ENCODE measurements at regions of chrX and their contacts with region 1.

Region 1: DNA sequence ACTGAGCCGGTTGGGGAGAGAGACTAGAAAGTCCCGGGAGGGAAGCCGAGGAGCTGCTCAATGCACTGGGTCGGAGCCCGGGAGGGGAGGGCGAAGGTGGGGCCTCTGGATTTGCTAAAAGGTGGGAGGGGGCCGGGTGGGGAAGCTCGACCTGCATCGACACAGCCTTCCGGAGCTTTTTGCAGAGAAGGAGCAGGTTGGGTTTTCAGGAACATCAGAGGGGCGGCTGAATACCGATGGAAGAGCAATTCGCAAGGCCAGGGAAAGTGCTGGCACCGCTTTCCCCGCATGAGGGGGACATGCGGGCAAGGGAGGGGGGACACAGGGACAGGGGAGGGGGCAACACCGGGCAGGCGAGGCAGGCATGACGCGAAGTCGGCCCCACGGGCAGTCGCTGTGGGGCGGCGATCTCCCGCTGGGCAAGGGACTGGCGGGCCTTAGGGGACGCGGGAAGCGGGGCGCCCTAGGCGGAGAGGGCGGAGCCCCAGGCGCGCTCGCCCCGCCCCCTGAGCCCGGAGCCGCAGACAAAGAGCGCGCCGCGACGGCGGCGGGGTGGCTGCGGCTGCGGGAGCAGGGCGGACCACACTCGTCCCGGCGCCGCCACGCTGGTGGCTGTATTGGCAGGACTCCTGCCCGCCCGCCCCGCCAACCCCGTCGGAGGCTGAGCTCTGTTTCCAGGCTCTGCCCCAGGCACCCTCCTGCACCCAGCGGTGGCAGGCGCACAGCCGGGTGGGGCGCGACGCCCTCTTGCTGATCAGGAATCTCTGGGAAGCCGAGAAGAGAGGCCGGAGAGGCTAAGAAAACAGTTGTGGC is 11.6 kb downstream of the PDZD4 start:
- DNase-seq: peak; percentile 25 to 71 (median 49)
- ATAC-seq: peak; percentile 76
- H3K4me3 ChIP-seq: peak overlapping the region; percentile 33
- H3K4me3 Mint-ChIP-seq: peak overlapping the region in 9 of 10 donors; percentile 48 to 69 (median 57)
- H3K27ac ChIP-seq: peak overlapping the region; percentile 51
- H3K27ac Mint-ChIP-seq: peak overlapping the region in 2 of 9 donors; percentile 55 to 87
- H3K4me1 ChIP-seq: peaks cover 39 to 44% of the 10 kb centered on the region in 2 donors
- H3K4me1 Mint-ChIP-seq: peaks cover 18 to 61% (median 40%) of the 10 kb centered on the region in 7 donors
- H3K27me3 ChIP-seq: no peaks in the 10 kb centered on the region
- H3K27me3 Mint-ChIP-seq: peaks cover 0 to 20% (median 0%) of the 10 kb centered on the region in 5 donors

Region 2: GRCh38 chrX:153828723-153829548 is 10.2 kb after region 1 on chrX:
- CTCF ChIA-PET with region 1: no interaction called
- POLR2A ChIA-PET with region 1: no interaction called
- intact Hi-C with region 1: loop called in 1 of 2 experiments (anchors 1 kb)
- DNase-seq: no peak
- ATAC-seq: peak; percentile 42
- H3K4me3 ChIP-seq: peak overlapping the region; percentile 24
- H3K4me3 Mint-ChIP-seq: peak overlapping the region; percentile 17 to 83 (median 72)
- H3K27ac ChIP-seq: no peak overlapping the region
- H3K27ac Mint-ChIP-seq: peak overlapping the region in 3 of 9 donors; percentile 41 to 58 (median 46)
- H3K4me1 ChIP-seq: peaks cover 0 to 3% of the 10 kb centered on the region in 2 donors
- H3K4me1 Mint-ChIP-seq: peaks cover 10 to 37% (median 20%) of the 10 kb centered on the region in 7 donors
- H3K27me3 ChIP-seq: no peaks in the 10 kb centered on the region
- H3K27me3 Mint-ChIP-seq: peaks cover 0 to 39% (median 0%) of the 10 kb centered on the region in 5 donors

Region 3: DNA sequence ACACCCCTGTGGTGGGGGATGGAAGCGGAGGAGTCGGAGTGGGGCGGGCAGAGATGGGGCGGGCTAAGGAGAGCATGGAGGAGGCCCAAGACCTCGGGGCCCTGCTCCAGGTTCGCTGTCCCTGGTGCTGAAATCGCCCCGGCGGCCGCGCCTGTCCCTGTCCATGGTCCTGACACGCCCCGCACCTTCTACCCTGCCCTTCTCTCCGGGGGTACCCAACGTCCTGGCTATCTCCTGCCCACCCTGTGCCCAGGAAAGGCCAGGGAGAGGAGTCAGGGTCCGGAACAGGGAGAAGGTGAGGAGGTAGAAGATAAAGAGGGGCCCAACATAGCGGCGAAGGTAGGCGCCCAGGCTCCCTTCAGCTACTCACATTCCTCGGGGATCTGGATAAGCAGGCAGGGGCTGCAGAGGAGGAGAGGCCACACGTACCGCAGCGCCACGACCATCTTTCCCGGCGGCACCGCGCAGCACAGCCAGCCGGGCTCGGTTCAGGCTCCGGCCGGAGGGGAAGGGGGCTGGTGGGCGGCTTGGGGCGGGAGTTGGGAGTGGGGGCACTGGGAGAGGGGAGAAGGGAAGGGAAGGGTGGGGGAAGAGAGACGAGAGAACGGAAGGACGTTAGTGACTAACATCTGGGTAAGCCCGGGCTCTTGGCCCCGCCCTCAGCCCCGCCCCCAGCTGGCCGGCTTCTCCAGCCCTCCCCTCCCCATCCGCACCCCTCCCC is 56.8 kb after region 1 on chrX:
- CTCF ChIA-PET with region 1: no interaction called
- POLR2A ChIA-PET with region 1: no interaction called
- intact Hi-C with region 1: loop called (anchors 5 kb)
- DNase-seq: peak; percentile 49 to 82 (median 58)
- ATAC-seq: peak; percentile 96
- H3K4me3 ChIP-seq: no peak overlapping the region
- H3K4me3 Mint-ChIP-seq: peak overlapping the region in 2 of 10 donors; percentile 29 to 45
- H3K27ac ChIP-seq: no peak overlapping the region
- H3K27ac Mint-ChIP-seq: peak overlapping the region in 5 of 9 donors; percentile 39 to 81 (median 66)
- H3K4me1 ChIP-seq: peaks cover 0 to 4% of the 10 kb centered on the region in 2 donors
- H3K4me1 Mint-ChIP-seq: peaks cover 7 to 25% (median 20%) of the 10 kb centered on the region in 7 donors
- H3K27me3 ChIP-seq: no peaks in the 10 kb centered on the region
- H3K27me3 Mint-ChIP-seq: peaks cover 0 to 18% (median 11%) of the 10 kb centered on the region in 5 donors

Region 4: DNA sequence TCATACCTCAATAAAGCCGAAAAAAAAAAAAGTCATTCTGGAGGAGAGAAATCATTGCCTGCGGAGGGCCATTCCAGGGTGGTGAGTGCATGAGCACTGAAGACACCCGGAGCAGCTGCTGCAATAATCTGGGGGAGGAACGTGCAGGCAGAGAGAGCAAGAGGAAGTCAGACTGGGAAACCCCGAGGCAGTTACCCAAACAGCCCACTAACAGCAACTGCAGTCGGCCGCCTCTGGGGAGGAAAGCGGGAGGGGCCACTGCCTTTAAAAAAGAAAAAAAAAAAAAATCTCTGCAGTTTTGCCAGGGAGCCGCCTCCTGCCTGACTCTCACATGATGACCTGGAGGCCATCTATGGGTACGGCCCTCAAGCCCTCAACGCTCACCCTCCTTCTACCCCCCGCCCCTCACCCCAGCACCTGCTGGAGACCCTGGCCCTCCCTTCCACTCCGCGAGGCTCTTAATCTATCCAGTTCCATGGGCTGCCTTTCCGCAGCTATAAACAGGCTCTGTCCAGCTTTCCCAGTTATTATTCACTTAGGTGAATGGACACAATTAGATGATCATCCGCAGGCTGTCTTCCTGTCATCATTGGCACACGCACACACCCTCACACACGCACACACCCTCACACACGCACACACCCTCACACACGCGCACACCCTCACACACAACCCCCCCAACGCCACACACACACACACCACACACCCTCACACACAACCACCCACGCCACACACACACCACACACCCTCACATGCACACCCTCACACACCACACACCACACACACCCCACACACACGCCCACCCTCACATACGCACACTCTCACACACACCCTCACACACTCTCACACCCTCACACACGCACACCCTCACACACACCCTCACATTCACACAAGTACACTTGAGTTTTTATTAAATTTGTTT is 82.3 kb after region 1 on chrX:
- CTCF ChIA-PET with region 1: no interaction called
- POLR2A ChIA-PET with region 1: no interaction called
- intact Hi-C with region 1: loop called in 1 of 2 experiments (anchors 5 kb)
- DNase-seq: peak in 8 of 9 donors; percentile 45 to 76 (median 64)
- ATAC-seq: peak; percentile 91
- H3K4me3 ChIP-seq: no peak overlapping the region
- H3K4me3 Mint-ChIP-seq: peak overlapping the region; percentile 51 to 84 (median 64)
- H3K27ac ChIP-seq: no peak overlapping the region
- H3K27ac Mint-ChIP-seq: peak overlapping the region in 8 of 9 donors; percentile 33 to 88 (median 71)
- H3K4me1 ChIP-seq: peaks cover 25 to 35% of the 10 kb centered on the region in 2 donors
- H3K4me1 Mint-ChIP-seq: peaks cover 16 to 54% (median 43%) of the 10 kb centered on the region in 7 donors
- H3K27me3 ChIP-seq: no peaks in the 10 kb centered on the region
- H3K27me3 Mint-ChIP-seq: peaks cover 0 to 5% (median 0%) of the 10 kb centered on the region in 5 donors

Measured in naive thymus-derived CD4-positive, alpha-beta T cell (primary cell).